Esophagus squamous epithelium (tissue), 5 donors: ENCODE measurements at regions of chr3 and their contacts with region 1.

Region 1: GRCh38 chr3:22565393-22565792 is 637.7 kb upstream of the UBE2E2 start:
- DNase-seq: no peak
- H3K4me3 ChIP-seq: no peak overlapping the region
- H3K27ac ChIP-seq: no peak overlapping the region
- H3K4me1 ChIP-seq: no peaks in the 10 kb centered on the region
- H3K27me3 ChIP-seq: no peaks in the 10 kb centered on the region
- CTCF ChIP-seq: no peak
- POLR2A ChIP-seq: no peak

Region 2: GRCh38 chr3:22141769-22142168 is 423.6 kb before region 1 on chr3:
- intact Hi-C with region 1: no loop called
- DNase-seq: no peak
- H3K4me3 ChIP-seq: no peak overlapping the region
- H3K27ac ChIP-seq: no peak overlapping the region
- H3K4me1 ChIP-seq: no peaks in the 10 kb centered on the region
- H3K27me3 ChIP-seq: no peaks in the 10 kb centered on the region
- CTCF ChIP-seq: no peak
- POLR2A ChIP-seq: no peak

Region 3: GRCh38 chr3:22507709-22508108 is 57.7 kb before region 1 on chr3:
- intact Hi-C with region 1: no loop called
- DNase-seq: no peak
- H3K4me3 ChIP-seq: no peak overlapping the region
- H3K27ac ChIP-seq: no peak overlapping the region
- H3K4me1 ChIP-seq: no peaks in the 10 kb centered on the region
- H3K27me3 ChIP-seq: no peaks in the 10 kb centered on the region
- CTCF ChIP-seq: no peak
- POLR2A ChIP-seq: no peak

Region 4: GRCh38 chr3:22713936-22714335 is 148.5 kb after region 1 on chr3:
- intact Hi-C with region 1: no loop called
- DNase-seq: no peak
- H3K4me3 ChIP-seq: no peak overlapping the region
- H3K27ac ChIP-seq: no peak overlapping the region
- H3K4me1 ChIP-seq: no peaks in the 10 kb centered on the region
- H3K27me3 ChIP-seq: no peaks in the 10 kb centered on the region
- CTCF ChIP-seq: no peak
- POLR2A ChIP-seq: no peak

Region 5: GRCh38 chr3:22819209-22819608 is 253.8 kb after region 1 on chr3:
- intact Hi-C with region 1: no loop called
- DNase-seq: no peak
- H3K4me3 ChIP-seq: no peak overlapping the region
- H3K27ac ChIP-seq: no peak overlapping the region
- H3K4me1 ChIP-seq: no peaks in the 10 kb centered on the region
- H3K27me3 ChIP-seq: no peaks in the 10 kb centered on the region
- CTCF ChIP-seq: no peak
- POLR2A ChIP-seq: no peak

Region 6: GRCh38 chr3:22960105-22960984 is 395.0 kb after region 1 on chr3:
- intact Hi-C with region 1: loop called (anchors 10 kb)
- DNase-seq: no peak
- H3K4me3 ChIP-seq: peak overlapping the region in 1 of 4 donors; percentile 38
- H3K27ac ChIP-seq: no peak overlapping the region
- H3K4me1 ChIP-seq: peaks cover 0 to 9% (median 0%) of the 10 kb centered on the region in 3 donors
- H3K27me3 ChIP-seq: peaks cover 0 to 6% (median 0%) of the 10 kb centered on the region in 4 donors
- CTCF ChIP-seq: peak; percentile 47 to 67 (median 58)
- POLR2A ChIP-seq: no peak